ENCODE measurements at regions of chr6 and their contacts with region 1.

Region 1: GRCh38 chr6:101401792-101402621 is 8.5 kb downstream of the GRIK2 start:
- DNase-seq: no peak
- H3K4me3 ChIP-seq: no peak overlapping the region
- H3K4me3 Mint-ChIP-seq: no peak overlapping the region
- H3K27ac Mint-ChIP-seq: no peak overlapping the region
- H3K4me1 ChIP-seq: peaks cover 4% of the 10 kb centered on the region; the same call in 1 of the 2 replicates
- H3K4me1 Mint-ChIP-seq: no peaks in the 10 kb centered on the region
- H3K27me3 ChIP-seq: no peaks in the 10 kb centered on the region
- H3K27me3 Mint-ChIP-seq: peaks cover 4% of the 10 kb centered on the region
- CTCF ChIP-seq: no peak

Region 2: DNA sequence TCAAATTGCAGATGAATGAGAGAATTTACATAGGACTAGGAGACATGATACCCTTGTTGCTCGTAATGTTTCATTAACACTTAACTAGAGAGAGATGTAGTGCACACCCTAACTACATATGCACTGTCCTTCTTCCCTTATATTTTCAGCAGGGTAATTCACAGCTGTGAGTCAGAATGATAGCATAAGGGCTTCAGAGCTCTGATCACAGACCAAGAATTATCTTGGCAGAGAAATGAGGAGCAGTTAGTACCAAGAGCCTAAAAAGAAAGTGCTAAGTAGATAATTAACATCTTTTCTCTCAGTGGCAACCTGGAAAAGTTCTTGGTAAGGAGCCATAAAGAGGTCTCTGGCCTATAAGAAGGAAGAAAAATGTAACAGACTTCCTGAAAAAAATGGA is 27.3 kb after region 1 on chr6:
- CTCF ChIA-PET with region 1: no interaction called
- POLR2A ChIA-PET with region 1: no interaction called
- intact Hi-C with region 1: no loop called
- DNase-seq: no peak
- H3K4me3 ChIP-seq: no peak overlapping the region
- H3K4me3 Mint-ChIP-seq: no peak overlapping the region
- H3K27ac Mint-ChIP-seq: no peak overlapping the region
- H3K4me1 ChIP-seq: no peaks in the 10 kb centered on the region
- H3K4me1 Mint-ChIP-seq: no peaks in the 10 kb centered on the region
- H3K27me3 ChIP-seq: no peaks in the 10 kb centered on the region
- H3K27me3 Mint-ChIP-seq: no peaks in the 10 kb centered on the region
- CTCF ChIP-seq: no peak

Region 3: GRCh38 chr6:101489456-101489855 is 87.4 kb after region 1 on chr6:
- CTCF ChIA-PET with region 1: no interaction called
- POLR2A ChIA-PET with region 1: no interaction called
- intact Hi-C with region 1: loop called (anchors 5 kb)
- DNase-seq: no peak
- H3K4me3 ChIP-seq: no peak overlapping the region
- H3K4me3 Mint-ChIP-seq: no peak overlapping the region
- H3K27ac Mint-ChIP-seq: no peak overlapping the region
- H3K4me1 ChIP-seq: peaks cover 14% of the 10 kb centered on the region
- H3K4me1 Mint-ChIP-seq: peaks cover 16% of the 10 kb centered on the region
- H3K27me3 ChIP-seq: no peaks in the 10 kb centered on the region
- H3K27me3 Mint-ChIP-seq: no peaks in the 10 kb centered on the region
- CTCF ChIP-seq: no peak

Region 4: DNA sequence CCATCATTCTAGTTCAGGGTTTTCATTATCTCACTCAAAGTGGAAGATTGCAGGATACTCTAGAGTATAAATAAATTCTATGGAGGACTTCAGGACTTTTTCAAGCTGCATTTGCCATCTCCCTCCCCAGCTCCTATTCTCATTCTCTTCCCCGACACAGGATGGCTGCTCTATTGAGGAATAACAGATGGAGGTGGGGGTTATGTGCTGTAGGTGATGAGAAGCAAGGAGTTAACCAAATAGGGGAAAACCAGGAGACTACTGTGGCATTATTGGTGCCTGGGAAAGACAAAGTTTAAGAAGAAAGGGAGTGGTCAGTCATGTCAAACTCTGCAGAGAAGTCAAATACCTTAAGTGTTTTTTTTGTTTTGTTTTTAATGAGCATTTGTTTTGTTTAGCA is 100.8 kb after region 1 on chr6:
- CTCF ChIA-PET with region 1: no interaction called
- POLR2A ChIA-PET with region 1: no interaction called
- intact Hi-C with region 1: no loop called
- DNase-seq: no peak
- H3K4me3 ChIP-seq: no peak overlapping the region
- H3K4me3 Mint-ChIP-seq: no peak overlapping the region
- H3K27ac Mint-ChIP-seq: no peak overlapping the region
- H3K4me1 ChIP-seq: no peaks in the 10 kb centered on the region
- H3K4me1 Mint-ChIP-seq: no peaks in the 10 kb centered on the region
- H3K27me3 ChIP-seq: no peaks in the 10 kb centered on the region
- H3K27me3 Mint-ChIP-seq: peaks cover 4% of the 10 kb centered on the region
- CTCF ChIP-seq: no peak

Region 5: DNA sequence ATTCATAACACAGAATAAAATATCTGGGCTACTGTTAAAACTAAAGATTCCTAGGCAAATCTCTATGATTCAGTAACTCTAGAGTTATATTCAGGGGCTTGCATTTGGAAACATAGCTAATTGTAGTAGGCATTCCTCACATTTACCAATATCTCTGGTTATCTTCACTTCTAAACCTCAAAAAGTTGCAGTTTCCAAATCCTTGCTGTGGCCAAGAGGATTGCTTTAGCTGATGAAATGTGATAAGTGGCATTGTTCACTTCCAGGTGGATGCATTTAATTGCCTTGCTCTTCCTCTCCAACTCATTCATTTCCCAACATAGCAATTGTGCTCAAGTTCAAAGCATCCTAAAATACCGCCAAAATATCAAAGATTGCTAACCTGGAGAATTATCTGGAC is 238.1 kb after region 1 on chr6:
- CTCF ChIA-PET with region 1: no interaction called
- POLR2A ChIA-PET with region 1: no interaction called
- intact Hi-C with region 1: loop called (anchors 10 kb)
- DNase-seq: no peak
- H3K4me3 ChIP-seq: no peak overlapping the region
- H3K4me3 Mint-ChIP-seq: no peak overlapping the region
- H3K27ac Mint-ChIP-seq: no peak overlapping the region
- H3K4me1 ChIP-seq: no peaks in the 10 kb centered on the region
- H3K4me1 Mint-ChIP-seq: no peaks in the 10 kb centered on the region
- H3K27me3 ChIP-seq: no peaks in the 10 kb centered on the region
- H3K27me3 Mint-ChIP-seq: peaks cover 5% of the 10 kb centered on the region
- CTCF ChIP-seq: no peak

Region 6: DNA sequence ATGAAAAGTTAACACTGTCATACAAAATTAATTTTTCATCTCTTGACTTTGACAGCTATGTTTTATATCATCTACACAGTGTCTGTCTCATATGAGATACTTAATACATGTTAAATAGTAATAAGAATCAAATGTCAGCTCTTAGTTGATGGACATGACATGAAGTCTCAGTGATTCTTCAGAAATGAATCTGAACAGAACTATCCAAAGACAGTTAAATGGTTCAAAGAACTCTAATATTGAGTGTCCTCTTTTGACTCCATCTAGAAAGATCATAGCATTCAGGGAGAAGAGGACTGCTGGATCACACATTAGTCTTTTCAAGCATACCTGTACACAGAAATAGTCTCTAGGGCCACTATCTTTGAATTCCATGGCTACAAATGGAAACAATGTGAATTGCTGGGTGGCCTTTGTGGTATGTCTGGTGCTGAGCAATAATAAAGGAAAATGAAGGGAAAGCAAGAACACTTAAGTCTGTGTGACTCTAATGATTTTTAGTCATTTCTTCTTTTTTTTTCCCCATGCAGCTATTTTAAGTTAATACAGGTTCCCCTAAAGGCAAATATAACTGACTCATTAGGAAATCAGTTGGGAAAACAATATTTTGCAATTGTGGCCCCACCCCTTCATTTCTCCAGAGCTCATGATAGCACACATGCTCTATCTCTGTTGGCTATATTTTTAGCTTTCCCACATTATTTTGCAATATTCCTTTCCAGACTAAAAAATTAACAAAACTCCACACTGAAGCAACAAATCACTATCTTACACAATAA is 359.0 kb after region 1 on chr6:
- CTCF ChIA-PET with region 1: no interaction called
- POLR2A ChIA-PET with region 1: no interaction called
- intact Hi-C with region 1: loop called (anchors 5 kb)
- DNase-seq: no peak
- H3K4me3 ChIP-seq: no peak overlapping the region
- H3K4me3 Mint-ChIP-seq: no peak overlapping the region
- H3K27ac Mint-ChIP-seq: no peak overlapping the region
- H3K4me1 ChIP-seq: peaks cover 8% of the 10 kb centered on the region; the same call in 1 of the 2 replicates
- H3K4me1 Mint-ChIP-seq: peaks cover 16% of the 10 kb centered on the region
- H3K27me3 ChIP-seq: no peaks in the 10 kb centered on the region
- H3K27me3 Mint-ChIP-seq: no peaks in the 10 kb centered on the region
- CTCF ChIP-seq: no peak

Measured in Caco-2 (cell line).